Esophagus squamous epithelium (tissue), 5 donors: ENCODE measurements at regions of chr7 and their contacts with region 1.

Region 1: GRCh38 chr7:83410989-83411591 is 237.8 kb downstream of the SEMA3E start:
- DNase-seq: no peak
- H3K4me3 ChIP-seq: no peak overlapping the region
- H3K27ac ChIP-seq: no peak overlapping the region
- H3K4me1 ChIP-seq: no peaks in the 10 kb centered on the region
- H3K27me3 ChIP-seq: no peaks in the 10 kb centered on the region
- CTCF ChIP-seq: peak in 4 of 6 experiments; percentile 49 to 74 (median 61)
- POLR2A ChIP-seq: no peak

Region 2: DNA sequence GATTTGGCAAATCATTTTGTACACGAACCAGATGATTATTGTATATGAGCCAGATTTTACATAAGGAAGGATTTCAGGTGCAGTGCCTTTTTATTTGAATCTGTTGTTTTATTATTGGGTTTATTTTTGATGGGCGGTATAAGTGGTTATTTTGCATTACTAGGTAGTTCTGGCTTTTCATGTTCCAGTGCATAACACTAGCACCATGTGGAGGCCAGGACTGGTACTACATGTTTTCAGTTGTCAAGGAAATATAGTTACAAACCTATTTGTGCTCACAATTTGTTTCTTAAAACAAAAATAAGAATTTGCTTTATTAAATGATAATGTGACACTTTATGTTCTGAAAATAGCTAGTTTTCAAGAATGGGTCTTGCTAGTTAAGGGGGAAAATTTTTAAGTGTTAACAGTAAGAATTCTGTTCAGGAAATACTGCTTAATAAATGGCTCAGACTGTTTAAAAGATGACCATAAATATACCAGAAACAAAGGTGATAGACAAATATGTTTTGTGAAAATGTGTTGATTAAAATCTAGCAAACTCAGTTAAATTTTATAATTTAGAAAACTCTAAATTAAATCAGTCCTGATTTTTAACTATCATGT is 245.0 kb after region 1 on chr7:
- intact Hi-C with region 1: loop called (anchors 10 kb)
- DNase-seq: no peak
- H3K4me3 ChIP-seq: no peak overlapping the region
- H3K27ac ChIP-seq: no peak overlapping the region
- H3K4me1 ChIP-seq: no peaks in the 10 kb centered on the region
- H3K27me3 ChIP-seq: no peaks in the 10 kb centered on the region
- CTCF ChIP-seq: peak; percentile 16 to 82 (median 70)
- POLR2A ChIP-seq: no peak